ENCODE measurements at regions of chr20 and their contacts with region 1.

Region 1: GRCh38 chr20:47356526-47357295 is at the start of gene ZMYND8:
- DNase-seq: peak; percentile 91 to 93
- ATAC-seq: peak; percentile 79
- H3K4me3 ChIP-seq: no peak within 1 kb of the TSS
- H3K27ac ChIP-seq: peak within 1 kb of the TSS; percentile 91 to 97
- H3K4me1 ChIP-seq: peaks cover 9 to 17% of the 10 kb centered on the region in 2 donors
- H3K27me3 ChIP-seq: no peaks in the 10 kb centered on the region
- total RNA-seq, gene ZMYND8: 19.1 to 27.4 TPM

Region 2: DNA sequence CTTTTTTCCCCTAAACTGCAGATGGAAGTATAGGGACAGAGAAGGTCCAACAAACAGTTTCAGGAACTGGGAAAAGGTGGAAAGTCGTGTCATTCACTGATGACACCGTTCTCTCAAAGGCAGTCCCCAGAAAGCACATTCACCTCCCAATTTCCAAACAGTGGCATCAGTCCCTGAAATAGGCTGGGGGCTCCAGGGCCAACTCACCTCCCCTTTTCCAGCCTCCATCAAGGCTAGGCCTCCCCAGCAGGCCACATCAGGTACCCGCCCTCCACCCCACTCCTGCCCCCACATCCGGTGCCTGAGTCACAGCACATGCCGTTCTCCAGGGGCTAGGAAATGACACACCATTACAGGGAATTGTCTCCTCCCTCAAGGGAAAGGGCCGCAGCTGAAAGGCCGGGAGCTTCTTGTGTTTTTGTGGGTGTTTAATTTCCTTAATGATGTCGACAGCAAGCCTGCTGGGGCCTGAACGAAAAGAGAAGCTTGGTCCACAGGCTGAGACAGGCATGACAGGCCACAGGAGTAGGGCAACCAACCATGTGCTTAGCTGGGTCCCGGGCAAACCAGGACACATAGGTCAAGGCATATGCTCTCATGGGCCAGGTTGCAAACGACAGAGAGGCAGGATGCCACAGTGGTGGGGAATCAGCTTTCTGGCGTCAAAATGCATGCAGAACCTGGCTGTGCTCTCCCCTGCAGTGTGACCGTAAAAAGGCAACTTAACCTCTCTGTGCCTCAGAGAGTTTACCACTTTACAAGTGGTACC is 39.4 kb before region 1 on chr20:
- intact Hi-C with region 1: loop called (anchors 2 to 5 kb)
- DNase-seq: peak; percentile 91 to 95
- ATAC-seq: peak; percentile 75
- H3K4me3 ChIP-seq: no peak overlapping the region
- H3K27ac ChIP-seq: peak overlapping the region; percentile 99
- H3K4me1 ChIP-seq: no peaks in the 10 kb centered on the region
- H3K27me3 ChIP-seq: no peaks in the 10 kb centered on the region

Region 3: GRCh38 chr20:47411161-47411560 is 54.5 kb after region 1 on chr20:
- intact Hi-C with region 1: no loop called
- DNase-seq: no peak
- ATAC-seq: peak; percentile 20
- H3K4me3 ChIP-seq: no peak overlapping the region
- H3K27ac ChIP-seq: no peak overlapping the region
- H3K4me1 ChIP-seq: peaks cover 0 to 2% of the 10 kb centered on the region in 2 donors
- H3K27me3 ChIP-seq: no peaks in the 10 kb centered on the region

Measured in aorta (tissue), 5 donors.